ENCODE measurements at regions of chr1 and their contacts with region 1.

Region 1: GRCh38 chr1:197902454-197903195 is at the start of gene C1orf53:
- DNase-seq: peak; percentile 78
- ATAC-seq: peak; percentile 95
- H3K4me3 Mint-ChIP-seq: peak within 1 kb of the TSS; percentile 78
- H3K27ac Mint-ChIP-seq: peak within 1 kb of the TSS; percentile 77
- H3K4me1 Mint-ChIP-seq: peaks cover 17% of the 10 kb centered on the region
- H3K27me3 Mint-ChIP-seq: peaks cover 53% of the 10 kb centered on the region
- total RNA-seq, gene C1orf53: 0.68 to 0.97 TPM

Region 2: DNA sequence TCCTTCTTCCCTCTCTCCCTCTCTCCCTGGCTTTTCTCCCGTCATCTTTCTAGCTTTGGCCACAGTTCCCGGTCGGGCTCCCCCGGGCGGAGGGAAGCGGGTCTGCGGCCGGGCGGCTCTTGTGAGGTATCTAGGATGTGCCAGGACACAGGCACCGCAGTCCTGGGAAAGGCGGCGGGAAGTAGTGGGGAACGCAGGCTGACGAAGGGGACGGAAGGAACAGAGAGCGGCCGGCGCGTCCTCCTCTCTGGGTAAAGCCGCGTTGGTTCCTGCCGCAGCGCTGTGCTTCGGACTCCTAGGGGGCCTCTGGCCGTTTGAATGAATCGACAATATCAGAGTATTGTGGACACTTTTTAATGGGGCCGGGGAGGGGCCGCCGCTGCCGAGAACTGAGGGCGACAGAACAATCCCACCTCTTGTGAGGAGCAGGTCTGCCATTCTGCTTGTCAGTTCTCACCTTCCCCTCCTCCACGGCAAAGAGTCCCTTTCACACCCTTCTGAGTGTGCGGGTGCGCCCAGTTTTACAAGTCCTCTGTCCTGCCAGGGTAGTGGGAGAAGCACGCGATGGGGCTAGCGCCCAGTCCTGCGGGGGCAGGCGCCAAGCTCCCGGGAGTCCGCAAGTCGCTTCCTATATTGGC is 13.4 kb after region 1 on chr1:
- CTCF ChIA-PET with region 1: interaction called, 64 read pairs
- POLR2A ChIA-PET with region 1: interaction called, 8 read pairs
- DNase-seq: no peak
- ATAC-seq: no peak
- H3K4me3 Mint-ChIP-seq: peak overlapping the region; percentile 73
- H3K27ac Mint-ChIP-seq: no peak overlapping the region
- H3K4me1 Mint-ChIP-seq: peaks cover 90% of the 10 kb centered on the region
- H3K27me3 Mint-ChIP-seq: peaks cover 99% of the 10 kb centered on the region

Measured in activated CD8-positive, alpha-beta T cell treated with anti-CD3 and anti-CD28 coated beads, Interleukin-2, amount 10 ng/mL, durations not matched to agents 7 days and 5 days (primary cell).